ENCODE measurements at regions of chr15 and their contacts with region 1.

Region 1: GRCh38 chr15:92097474-92098178 is 244.1 kb downstream of the SLCO3A1 start:
- DNase-seq: no peak
- ATAC-seq: peak; percentile 95
- H3K4me3 ChIP-seq: 0 out of 4 replicates have a peak overlapping the region, but pooled peaks of 1 of the 2 experiments have one; percentile 2
- H3K27ac ChIP-seq: no peak overlapping the region
- H3K4me1 ChIP-seq: no peaks in the 10 kb centered on the region
- H3K27me3 ChIP-seq: no peaks in the 10 kb centered on the region
- CTCF ChIP-seq: peak; percentile 89

Region 2: DNA sequence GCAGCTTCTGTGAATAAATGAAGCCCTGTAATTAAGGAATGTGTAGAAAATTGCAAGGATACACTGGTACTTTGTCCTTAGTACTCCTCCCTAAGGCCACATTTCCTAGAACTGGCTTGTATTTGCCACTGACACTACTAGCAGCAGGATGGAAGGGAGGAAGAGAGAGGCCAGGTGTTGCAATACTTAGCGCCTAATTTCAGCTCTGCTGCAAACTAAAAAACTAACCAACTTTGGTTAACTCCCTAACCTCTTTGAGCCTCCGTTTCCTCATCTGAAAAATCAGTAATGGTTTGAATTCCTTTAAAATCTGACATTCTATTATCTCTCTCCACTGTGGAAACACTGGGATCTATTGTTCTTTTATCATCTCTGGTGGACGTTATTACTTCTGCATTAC is 740.6 kb before region 1 on chr15:
- CTCF ChIA-PET with region 1: no interaction called
- POLR2A ChIA-PET with region 1: no interaction called
- in situ Hi-C with region 1: no loop called
- intact Hi-C with region 1: no loop called
- DNase-seq: no peak
- ATAC-seq: no peak
- H3K4me3 ChIP-seq: no peak overlapping the region
- H3K27ac ChIP-seq: no peak overlapping the region
- H3K4me1 ChIP-seq: no peaks in the 10 kb centered on the region
- H3K27me3 ChIP-seq: no peaks in the 10 kb centered on the region; the same call in 1 of the 2 replicates
- CTCF ChIP-seq: no peak

Region 3: DNA sequence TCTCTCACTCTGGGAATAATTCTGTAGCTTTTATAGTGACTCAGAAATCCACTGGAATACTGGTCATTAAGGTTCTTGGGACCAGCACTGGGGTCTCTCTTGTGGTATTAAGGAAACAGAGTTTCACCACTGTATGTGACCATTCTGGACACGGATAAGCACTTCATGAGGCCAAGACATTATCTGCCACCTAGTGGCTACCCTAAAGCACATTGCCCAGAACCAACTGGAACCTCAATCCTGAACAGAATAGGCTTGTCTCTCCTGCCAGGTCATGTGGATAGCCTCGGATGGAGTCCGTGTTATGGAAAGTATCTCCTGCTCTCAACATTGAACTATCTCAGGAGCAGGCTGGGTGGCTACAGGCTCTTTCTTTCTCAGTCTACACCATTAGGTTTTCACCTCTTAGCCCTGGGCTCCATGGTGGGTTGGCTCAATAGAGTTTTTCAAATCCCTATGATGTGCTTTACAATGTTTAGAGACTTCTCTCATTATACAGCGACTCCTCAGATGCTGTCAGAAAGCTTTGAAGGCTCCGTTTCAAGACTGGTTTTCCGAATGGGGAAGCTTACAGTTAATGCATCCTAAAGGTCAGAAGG is 128.5 kb after region 1 on chr15:
- CTCF ChIA-PET with region 1: no interaction called
- POLR2A ChIA-PET with region 1: no interaction called
- in situ Hi-C with region 1: no loop called
- intact Hi-C with region 1: loop called (anchors 5 kb)
- DNase-seq: no peak
- ATAC-seq: peak; percentile 78
- H3K4me3 ChIP-seq: no peak overlapping the region
- H3K27ac ChIP-seq: no peak overlapping the region
- H3K4me1 ChIP-seq: no peaks in the 10 kb centered on the region
- H3K27me3 ChIP-seq: no peaks in the 10 kb centered on the region
- CTCF ChIP-seq: peak; percentile 50

Region 4: GRCh38 chr15:92247649-92248242 is 150.1 kb after region 1 on chr15:
- CTCF ChIA-PET with region 1: no interaction called
- POLR2A ChIA-PET with region 1: no interaction called
- in situ Hi-C with region 1: no loop called
- intact Hi-C with region 1: no loop called
- DNase-seq: no peak
- ATAC-seq: no peak
- H3K4me3 ChIP-seq: no peak overlapping the region
- H3K27ac ChIP-seq: no peak overlapping the region
- H3K4me1 ChIP-seq: no peaks in the 10 kb centered on the region
- H3K27me3 ChIP-seq: peaks cover 18% of the 10 kb centered on the region
- CTCF ChIP-seq: no peak

Region 5: GRCh38 chr15:92343924-92344643 is 246.5 kb after region 1 on chr15:
- CTCF ChIA-PET with region 1: no interaction called
- POLR2A ChIA-PET with region 1: no interaction called
- in situ Hi-C with region 1: no loop called
- intact Hi-C with region 1: no loop called
- DNase-seq: no peak
- ATAC-seq: no peak
- H3K4me3 ChIP-seq: no peak overlapping the region
- H3K27ac ChIP-seq: no peak overlapping the region
- H3K4me1 ChIP-seq: no peaks in the 10 kb centered on the region
- H3K27me3 ChIP-seq: peaks cover 2% of the 10 kb centered on the region; the same call in 1 of the 2 replicates
- CTCF ChIP-seq: no peak

Region 6: DNA sequence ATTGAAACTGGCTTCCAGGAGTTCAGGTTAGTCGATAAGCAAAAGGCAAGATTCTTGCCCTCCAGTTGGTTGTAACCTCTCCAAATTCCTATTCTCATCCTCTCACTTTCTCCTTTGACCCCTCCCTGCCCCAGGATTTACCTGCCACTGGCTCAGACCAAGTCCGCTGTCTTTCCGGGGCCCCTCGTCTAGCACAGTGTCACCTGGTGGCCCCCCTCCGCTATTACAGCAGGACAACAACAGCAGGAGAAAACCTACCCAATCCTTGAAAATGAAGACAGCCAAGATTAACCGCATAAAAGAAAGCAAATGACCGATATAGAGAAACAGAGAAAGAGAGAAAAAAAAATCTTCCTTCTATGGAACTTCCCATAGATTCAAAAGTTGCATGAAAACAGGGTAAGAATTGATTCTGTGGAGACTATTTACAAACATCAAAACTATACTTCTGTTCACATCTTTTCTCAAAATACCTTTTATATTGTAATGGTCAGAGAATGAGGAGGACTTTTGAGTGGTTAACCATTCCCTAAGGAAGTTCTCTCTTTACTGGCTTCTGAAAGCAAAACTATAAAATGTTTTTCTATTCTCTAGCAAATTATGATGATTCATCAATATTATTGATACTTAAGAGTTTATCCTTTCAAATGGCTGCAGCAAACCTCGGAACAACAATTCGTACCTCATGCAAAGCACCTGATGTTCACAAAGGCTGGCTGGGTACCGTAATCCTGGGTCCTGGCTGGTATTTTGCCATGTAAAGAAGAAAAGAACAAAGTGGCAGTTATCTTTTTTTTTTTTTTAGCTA is 286.1 kb after region 1 on chr15:
- CTCF ChIA-PET with region 1: interaction called, 3 read pairs
- POLR2A ChIA-PET with region 1: no interaction called
- in situ Hi-C with region 1: no loop called
- intact Hi-C with region 1: loop called (anchors 1 kb)
- DNase-seq: no peak
- ATAC-seq: no peak
- H3K4me3 ChIP-seq: no peak overlapping the region
- H3K27ac ChIP-seq: no peak overlapping the region
- H3K4me1 ChIP-seq: no peaks in the 10 kb centered on the region
- H3K27me3 ChIP-seq: peaks cover 19% of the 10 kb centered on the region
- CTCF ChIP-seq: peak; percentile 86

Region 7: DNA sequence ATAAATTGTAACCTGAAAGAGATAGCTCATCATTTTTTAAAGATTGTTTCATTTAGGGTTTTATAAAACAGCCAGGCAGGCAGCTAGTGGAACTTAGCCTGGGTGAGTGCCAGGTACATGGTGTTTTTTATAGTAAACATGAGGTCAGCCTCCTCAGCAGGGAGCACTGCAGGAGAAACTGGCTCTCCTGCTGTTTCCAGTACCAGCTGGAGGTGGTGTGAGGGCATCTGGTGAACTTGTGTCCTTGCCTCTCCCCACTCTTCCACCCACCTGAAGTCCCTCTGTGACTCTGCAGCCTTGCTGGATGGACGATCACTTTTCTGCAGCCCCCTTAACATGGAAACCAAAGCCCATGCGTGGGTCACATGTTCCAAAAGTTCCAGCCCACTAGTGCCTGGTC is 429.6 kb after region 1 on chr15:
- CTCF ChIA-PET with region 1: no interaction called
- POLR2A ChIA-PET with region 1: no interaction called
- in situ Hi-C with region 1: no loop called
- intact Hi-C with region 1: loop called (anchors 5 kb)
- DNase-seq: no peak
- ATAC-seq: no peak
- H3K4me3 ChIP-seq: no peak overlapping the region
- H3K27ac ChIP-seq: no peak overlapping the region
- H3K4me1 ChIP-seq: no peaks in the 10 kb centered on the region
- H3K27me3 ChIP-seq: no peaks in the 10 kb centered on the region
- CTCF ChIP-seq: no peak

Region 8: DNA sequence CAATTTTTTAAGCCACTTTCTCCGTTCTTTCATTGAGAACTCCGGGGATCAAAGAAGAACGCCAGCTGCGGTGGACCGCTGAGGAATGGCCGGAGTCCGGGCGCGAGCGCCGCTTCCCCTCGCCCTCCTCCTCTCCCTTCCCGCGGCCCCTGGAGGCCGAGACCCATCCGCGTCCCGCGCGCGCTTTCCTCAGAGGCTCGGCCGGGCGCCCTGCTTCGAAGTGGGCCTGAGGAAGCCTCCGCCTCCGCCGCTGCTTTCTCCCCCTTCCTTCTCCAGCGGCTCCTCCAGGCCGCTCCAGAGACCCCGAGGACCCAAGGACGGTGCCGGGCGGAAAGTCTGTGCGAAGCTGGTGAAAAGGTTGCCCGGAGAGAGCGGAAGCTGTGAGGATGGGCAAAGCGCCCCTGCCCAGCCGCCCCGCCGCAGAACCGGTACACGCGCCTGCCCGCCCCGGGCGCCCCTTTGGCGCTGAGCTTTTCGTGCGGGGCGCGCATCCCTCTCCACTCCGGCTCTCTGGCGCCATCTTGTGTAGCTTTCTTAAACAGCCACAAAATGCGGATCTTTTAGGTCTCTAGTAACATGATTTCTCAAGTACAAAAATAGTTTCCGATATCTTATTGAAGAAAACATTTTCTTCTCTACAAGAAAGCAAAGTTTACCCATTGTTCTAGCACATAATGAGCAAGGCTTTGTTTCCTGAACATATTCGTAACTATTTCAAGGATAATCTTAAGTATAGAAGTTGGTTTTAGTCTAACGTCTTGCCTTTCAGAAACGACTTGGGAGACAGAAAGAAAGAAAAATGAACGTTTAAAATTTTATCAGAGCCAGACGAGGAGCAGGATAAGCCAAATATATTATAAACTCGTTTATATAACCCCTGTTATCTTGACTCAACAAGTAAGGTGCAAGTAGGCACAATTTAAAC is 617.1 kb after region 1 on chr15:
- CTCF ChIA-PET with region 1: interaction called, 4 read pairs
- POLR2A ChIA-PET with region 1: no interaction called
- in situ Hi-C with region 1: no loop called
- intact Hi-C with region 1: loop called (anchors 5 kb)
- DNase-seq: no peak
- ATAC-seq: peak; percentile 89
- H3K4me3 ChIP-seq: peak overlapping the region; percentile 57 to 59
- H3K27ac ChIP-seq: peak overlapping the region; percentile 55
- H3K4me1 ChIP-seq: 0 out of 2 replicates have a peak, but pooled peaks cover 4% of the 10 kb centered on the region
- H3K27me3 ChIP-seq: no peaks in the 10 kb centered on the region
- CTCF ChIP-seq: peak; percentile 96

Region 9: DNA sequence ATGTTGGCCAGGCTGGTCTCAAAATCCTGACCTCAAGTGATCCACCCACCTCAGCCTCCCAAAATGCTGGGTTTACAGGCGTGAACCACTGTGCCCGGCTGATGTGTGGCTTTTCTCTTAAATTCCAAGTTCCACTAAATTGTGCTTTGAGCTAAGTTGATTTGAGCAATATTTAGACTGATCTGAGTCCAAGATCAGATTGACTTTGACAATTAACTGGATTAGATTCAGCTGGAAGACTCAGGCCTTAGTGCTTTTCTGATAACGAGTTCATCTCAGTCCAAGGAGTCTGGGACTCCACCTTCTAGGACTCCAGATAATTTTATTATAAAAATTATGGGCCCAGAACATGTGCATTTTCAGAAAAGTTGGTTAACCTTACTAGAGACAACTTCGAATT is 652.3 kb after region 1 on chr15:
- CTCF ChIA-PET with region 1: interaction called, 11 read pairs
- POLR2A ChIA-PET with region 1: no interaction called
- in situ Hi-C with region 1: no loop called
- intact Hi-C with region 1: no loop called
- DNase-seq: no peak
- ATAC-seq: no peak
- H3K4me3 ChIP-seq: no peak overlapping the region
- H3K27ac ChIP-seq: no peak overlapping the region
- H3K4me1 ChIP-seq: no peaks in the 10 kb centered on the region
- H3K27me3 ChIP-seq: no peaks in the 10 kb centered on the region
- CTCF ChIP-seq: no peak

Region 10: DNA sequence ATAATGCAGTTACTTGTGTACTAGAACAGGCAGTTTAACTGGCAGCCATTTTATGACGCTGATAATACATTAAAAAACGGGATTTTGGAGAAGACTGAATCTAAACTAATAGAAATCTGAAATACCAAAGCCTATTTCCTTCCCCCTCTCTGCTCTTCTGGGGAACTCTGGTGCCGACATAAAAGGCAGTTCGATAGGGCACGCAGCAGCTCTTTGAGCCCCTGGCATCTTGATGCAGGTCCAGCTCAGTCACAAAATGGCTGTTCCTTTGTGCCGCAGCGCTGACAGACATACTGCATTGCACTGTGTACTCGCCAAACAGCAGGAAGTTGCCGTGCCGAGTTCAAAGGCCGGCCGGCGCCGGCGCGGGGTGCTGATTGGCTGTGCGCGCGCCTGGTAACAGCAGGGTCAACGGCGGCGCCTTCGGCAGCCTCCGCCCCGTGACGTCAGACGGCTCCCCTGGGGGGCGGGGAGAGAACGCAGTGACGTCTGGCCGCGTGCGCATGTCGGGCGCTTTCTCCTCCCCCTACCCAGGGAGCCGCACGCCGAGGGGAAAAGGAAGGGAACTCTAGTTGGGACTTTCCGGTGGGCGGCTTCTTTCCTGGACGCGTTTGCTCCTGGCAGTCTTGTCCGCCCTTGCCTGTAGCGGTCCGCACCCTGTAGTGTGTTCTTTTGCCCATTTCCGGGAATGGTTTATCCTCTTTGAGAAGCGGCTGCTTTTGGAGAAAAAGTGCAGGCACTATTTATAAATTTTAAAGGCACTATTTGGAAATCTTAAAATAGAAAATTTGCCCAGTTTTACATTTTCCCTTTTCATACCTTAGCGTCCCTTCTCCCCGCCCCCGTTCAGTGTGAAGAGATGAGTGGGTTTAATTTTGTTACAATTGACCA is 806.6 kb after region 1 on chr15:
- CTCF ChIA-PET with region 1: no interaction called
- POLR2A ChIA-PET with region 1: interaction called, 23 read pairs
- in situ Hi-C with region 1: no loop called
- intact Hi-C with region 1: no loop called
- DNase-seq: peak; percentile 91
- ATAC-seq: peak; percentile 91
- H3K4me3 ChIP-seq: peak overlapping the region; percentile 68 to 71
- H3K27ac ChIP-seq: peak overlapping the region; percentile 100
- H3K4me1 ChIP-seq: peaks cover 53% of the 10 kb centered on the region
- H3K27me3 ChIP-seq: no peaks in the 10 kb centered on the region
- CTCF ChIP-seq: no peak

Measured in Panc1 (cell line).